Endothelial cell of umbilical vein (primary cell): ENCODE measurements at regions of chr2 and their contacts with region 1.

Region 1: DNA sequence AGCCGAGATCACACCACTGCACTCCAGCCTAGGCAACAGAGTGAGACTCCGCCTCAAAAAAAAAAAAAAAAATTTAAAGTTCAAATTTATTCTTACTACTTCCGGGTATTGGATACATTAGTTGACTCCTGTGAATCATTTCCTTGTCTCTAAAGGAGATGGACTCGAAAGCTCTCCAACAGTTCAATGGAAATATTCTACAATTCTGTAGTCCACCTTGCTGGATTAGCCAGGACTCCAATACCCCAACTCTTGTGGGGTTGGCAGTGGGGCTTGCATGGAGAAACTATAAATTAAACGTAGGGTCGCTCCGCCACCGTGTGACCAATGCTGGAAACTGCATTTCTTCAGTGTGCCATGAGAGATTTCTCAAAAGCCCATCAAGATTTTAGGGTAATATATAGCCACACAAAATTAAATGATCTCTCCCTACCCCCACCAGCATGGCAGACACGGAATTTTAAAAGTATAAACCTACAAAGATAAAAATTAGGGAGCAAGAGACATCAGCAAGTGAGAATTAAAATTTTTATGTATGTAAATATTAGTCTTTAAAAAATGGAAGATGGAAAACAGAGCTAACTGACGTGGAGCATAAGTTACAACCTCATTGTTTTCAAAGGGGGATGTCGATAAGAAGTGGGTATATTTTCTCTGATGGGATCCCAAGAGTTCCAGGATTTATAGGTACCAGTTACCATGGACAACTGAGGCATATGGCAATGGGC is 27.8 kb upstream of the GAREM2 start:
- DNase-seq: peak; percentile 74
- H3K4me3 ChIP-seq: no peak overlapping the region
- H3K27ac ChIP-seq: no peak overlapping the region
- H3K4me1 ChIP-seq: peaks cover 11% of the 10 kb centered on the region
- H3K27me3 ChIP-seq: peaks cover 0 to 2% of the 10 kb centered on the region in 2 experiments
- CTCF ChIP-seq: peak; percentile 59 to 61
- POLR2A ChIP-seq: no peak

Region 2: GRCh38 chr2:25982273-25982967 is 162.7 kb before region 1 on chr2 and contains the start of gene KIF3C:
- CTCF ChIA-PET with region 1: interaction called, 10 read pairs
- POLR2A ChIA-PET with region 1: no interaction called
- dilution Hi-C with region 1: no loop called
- intact Hi-C with region 1: no loop called
- DNase-seq: peak; percentile 69
- H3K4me3 ChIP-seq: peak within 1 kb of the TSS; percentile 74 to 96 (median 86)
- H3K27ac ChIP-seq: no peak within 1 kb of the TSS
- H3K4me1 ChIP-seq: peaks cover 37% of the 10 kb centered on the region
- H3K27me3 ChIP-seq: no peaks in the 10 kb centered on the region
- CTCF ChIP-seq: no peak
- POLR2A ChIP-seq: peak; percentile 60
- total RNA-seq, gene KIF3C: 40.7 and 42.1 TPM in 2 replicates

Region 3: GRCh38 chr2:26469092-26469710 is 324.1 kb after region 1 on chr2:
- CTCF ChIA-PET with region 1: no interaction called
- POLR2A ChIA-PET with region 1: no interaction called
- dilution Hi-C with region 1: no loop called
- intact Hi-C with region 1: no loop called
- DNase-seq: peak; percentile 61
- H3K4me3 ChIP-seq: no peak overlapping the region
- H3K27ac ChIP-seq: no peak overlapping the region
- H3K4me1 ChIP-seq: no peaks in the 10 kb centered on the region
- H3K27me3 ChIP-seq: no peaks in the 10 kb centered on the region
- CTCF ChIP-seq: peak; percentile 62 to 79
- POLR2A ChIP-seq: no peak

Region 4: GRCh38 chr2:26852405-26853306 is 707.5 kb after region 1 on chr2:
- CTCF ChIA-PET with region 1: no interaction called
- POLR2A ChIA-PET with region 1: no interaction called
- dilution Hi-C with region 1: no loop called
- intact Hi-C with region 1: no loop called
- DNase-seq: no peak
- H3K4me3 ChIP-seq: no peak overlapping the region
- H3K27ac ChIP-seq: no peak overlapping the region
- H3K4me1 ChIP-seq: peaks cover 4% of the 10 kb centered on the region
- H3K27me3 ChIP-seq: peaks cover 45 to 59% of the 10 kb centered on the region in 2 experiments
- CTCF ChIP-seq: no peak
- POLR2A ChIP-seq: no peak

Region 5: DNA sequence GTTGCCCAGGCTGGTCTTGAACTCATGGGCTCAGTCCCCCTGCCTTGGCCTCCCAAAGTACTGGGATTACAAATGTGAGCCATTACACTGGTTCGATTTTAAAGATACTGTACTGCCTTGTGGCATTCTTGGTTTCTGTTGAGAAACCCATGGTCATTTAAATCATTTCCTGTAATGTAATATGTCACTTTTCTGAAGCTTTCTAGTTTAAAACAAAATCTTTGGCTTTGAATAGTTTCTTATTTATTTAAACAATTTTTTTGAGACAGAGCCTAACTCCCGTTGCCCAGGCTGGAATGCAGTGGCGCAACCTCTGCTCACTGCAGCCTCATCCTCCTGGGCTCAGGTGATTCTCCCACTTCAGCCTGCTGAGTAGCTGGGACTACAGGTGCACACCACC is 1446.6 kb after region 1 on chr2:
- CTCF ChIA-PET with region 1: no interaction called
- POLR2A ChIA-PET with region 1: no interaction called
- dilution Hi-C with region 1: no loop called
- intact Hi-C with region 1: no loop called
- DNase-seq: no peak
- H3K4me3 ChIP-seq: no peak overlapping the region
- H3K27ac ChIP-seq: no peak overlapping the region
- H3K4me1 ChIP-seq: peaks cover 2% of the 10 kb centered on the region
- H3K27me3 ChIP-seq: no peaks in the 10 kb centered on the region
- CTCF ChIP-seq: no peak
- POLR2A ChIP-seq: no peak